Right cardiac atrium (tissue), 5 donors: ENCODE measurements at regions of chr2 and their contacts with region 1.

Region 1: GRCh38 chr2:30231212-30231995 is at the start of gene LBH:
- DNase-seq: peak; percentile 86 to 96 (median 95)
- ATAC-seq: peak; percentile 88 to 92
- H3K4me3 ChIP-seq: peak within 1 kb of the TSS; percentile 66
- H3K27ac ChIP-seq: peak within 1 kb of the TSS; percentile 73
- H3K4me1 ChIP-seq: peaks cover 5% of the 10 kb centered on the region
- H3K27me3 ChIP-seq: no peaks in the 10 kb centered on the region
- total RNA-seq, gene LBH: 22.9 to 31.3 (median 24.2) TPM

Region 2: GRCh38 chr2:30346471-30347169 is 115.2 kb after region 1 on chr2:
- intact Hi-C with region 1: loop called (anchors 5 to 10 kb)
- DNase-seq: peak; percentile 75 to 91 (median 89)
- ATAC-seq: peak; percentile 97 to 98
- H3K4me3 ChIP-seq: peak overlapping the region; percentile 37
- H3K27ac ChIP-seq: peak overlapping the region; percentile 79
- H3K4me1 ChIP-seq: peaks cover 15% of the 10 kb centered on the region
- H3K27me3 ChIP-seq: no peaks in the 10 kb centered on the region

Region 3: DNA sequence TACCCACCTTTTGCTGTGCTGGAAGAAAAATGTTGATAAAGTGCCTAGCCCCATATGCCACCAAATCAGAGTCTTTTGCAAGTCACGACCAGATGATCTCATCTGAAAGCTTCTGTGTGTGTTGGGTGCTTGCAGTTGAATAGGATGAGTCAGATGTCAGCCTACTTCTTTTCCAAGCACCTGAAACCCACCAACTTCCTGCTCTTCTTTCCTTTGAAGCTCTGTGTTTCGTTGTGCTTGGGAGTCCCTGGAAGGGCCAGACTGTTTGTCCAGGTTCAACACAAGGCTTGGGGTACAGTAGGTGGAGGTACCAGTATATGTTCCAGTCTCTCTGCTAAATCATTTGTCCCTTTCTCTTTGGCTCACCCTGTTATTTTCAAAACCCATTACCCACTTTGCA is 178.8 kb after region 1 on chr2:
- intact Hi-C with region 1: loop called in 2 of 4 experiments (anchors 10 kb)
- DNase-seq: no peak
- ATAC-seq: no peak
- H3K4me3 ChIP-seq: no peak overlapping the region
- H3K27ac ChIP-seq: peak overlapping the region; percentile 21
- H3K4me1 ChIP-seq: peaks cover 19% of the 10 kb centered on the region
- H3K27me3 ChIP-seq: no peaks in the 10 kb centered on the region

Region 4: DNA sequence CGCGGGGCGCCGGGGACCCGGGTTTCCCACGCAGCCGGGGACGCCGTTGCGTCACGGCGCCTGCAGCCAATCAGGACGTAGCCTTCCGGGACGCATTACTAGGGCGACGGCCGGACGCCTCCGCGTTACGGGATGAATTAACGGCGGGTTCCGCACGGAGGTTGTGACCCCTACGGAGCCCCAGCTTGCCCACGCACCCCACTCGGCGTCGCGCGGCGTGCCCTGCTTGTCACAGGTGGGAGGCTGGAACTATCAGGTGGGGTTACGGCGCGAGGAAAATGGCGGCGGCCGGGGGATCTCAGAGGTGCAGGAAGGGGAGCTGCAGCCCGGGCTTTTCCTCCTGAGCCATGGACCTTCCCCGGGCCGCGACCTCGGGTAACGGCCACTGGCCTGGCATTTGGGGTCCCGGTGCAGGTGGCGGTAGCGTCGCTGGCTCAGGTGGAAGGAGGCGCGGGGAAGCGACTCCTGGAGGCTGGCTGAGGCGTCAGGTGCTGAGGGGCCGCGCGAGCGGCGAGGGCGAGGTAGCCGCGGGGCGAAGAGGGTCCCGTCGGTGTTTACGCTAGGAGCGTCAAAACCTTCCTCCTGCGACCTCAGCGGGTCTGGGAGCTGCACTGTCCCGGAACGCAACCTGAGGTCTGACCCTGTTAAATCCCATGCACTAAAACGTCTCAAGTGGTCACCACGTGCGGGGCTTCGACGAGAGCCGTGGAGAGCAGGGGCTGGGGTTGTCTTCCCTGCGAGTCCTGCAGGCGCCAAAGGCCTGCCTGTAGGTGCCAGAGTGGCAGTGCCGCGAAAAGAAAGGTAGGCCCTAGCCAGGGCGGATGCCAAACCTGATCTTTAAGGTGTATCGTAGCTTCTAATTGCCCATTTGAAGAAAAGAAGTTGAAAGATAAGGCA is 216.0 kb after region 1 on chr2 and contains the start of gene LCLAT1:
- intact Hi-C with region 1: loop called in 1 of 4 experiments (anchors 10 kb)
- DNase-seq: peak; percentile 88 to 95 (median 93)
- ATAC-seq: peak; percentile 98 to 99
- H3K4me3 ChIP-seq: peak within 1 kb of the TSS; percentile 92
- H3K27ac ChIP-seq: peak within 1 kb of the TSS; percentile 69
- H3K4me1 ChIP-seq: peaks cover 3% of the 10 kb centered on the region
- H3K27me3 ChIP-seq: no peaks in the 10 kb centered on the region
- total RNA-seq, gene LCLAT1: 15.8 to 18.7 (median 16.5) TPM

Region 5: GRCh38 chr2:30481323-30481800 is 250.0 kb after region 1 on chr2:
- intact Hi-C with region 1: no loop called
- DNase-seq: peak; percentile 31 to 75 (median 65)
- ATAC-seq: peak in 1 of 2 donors; percentile 57
- H3K4me3 ChIP-seq: no peak overlapping the region
- H3K27ac ChIP-seq: no peak overlapping the region
- H3K4me1 ChIP-seq: peaks cover 3% of the 10 kb centered on the region
- H3K27me3 ChIP-seq: no peaks in the 10 kb centered on the region